Activated CD4-positive, alpha-beta memory T cell treated with anti-CD3 and anti-CD28 coated beads, Interleukin-2, amount 10 ng/mL, durations not matched to agents 7 days and 5 days (primary cell): ENCODE measurements at regions of chr3 and their contacts with region 1.

Region 1: GRCh38 chr3:69161587-69162307 is 39.4 kb upstream of the LMOD3 start:
- DNase-seq: peak; percentile 42
- H3K4me3 Mint-ChIP-seq: no peak overlapping the region
- H3K27ac Mint-ChIP-seq: no peak overlapping the region
- H3K4me1 Mint-ChIP-seq: peaks cover 15% of the 10 kb centered on the region
- H3K27me3 Mint-ChIP-seq: peaks cover 7% of the 10 kb centered on the region

Region 2: DNA sequence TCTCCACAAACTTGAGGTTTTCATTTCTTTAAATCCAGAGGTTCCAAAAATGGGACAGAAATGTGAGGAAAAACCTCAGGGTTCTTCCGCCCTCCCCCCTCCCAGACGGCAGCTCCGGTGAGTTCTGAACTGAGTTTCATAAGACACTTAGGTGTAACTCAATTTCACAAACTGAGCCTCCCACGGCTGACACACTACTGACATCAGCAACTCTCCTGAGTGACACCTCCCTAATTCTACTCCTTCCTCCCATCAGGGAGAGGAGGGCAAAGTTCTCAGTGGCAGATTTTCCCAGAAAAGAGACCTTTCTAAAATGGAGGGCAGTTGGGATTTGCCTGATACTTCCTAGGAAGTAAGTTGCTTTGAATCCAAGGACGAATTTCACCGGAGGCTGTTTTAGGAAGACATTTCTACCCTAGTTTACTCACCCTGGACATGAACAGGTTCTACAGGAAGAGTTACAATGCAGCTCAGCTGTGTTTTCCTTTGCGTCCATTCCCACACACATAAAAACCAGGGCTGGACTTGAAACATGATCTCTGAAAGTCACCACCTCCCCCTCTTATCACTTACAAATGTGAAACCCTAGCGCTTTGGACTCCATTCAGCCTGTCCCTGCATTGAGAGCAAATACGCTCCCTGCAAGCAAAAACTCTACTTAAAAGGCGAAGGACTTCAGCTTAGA is 38.8 kb after region 1 on chr3:
- CTCF ChIA-PET with region 1: interaction called, 19 read pairs
- POLR2A ChIA-PET with region 1: interaction called, 6 read pairs
- DNase-seq: peak; percentile 68
- H3K4me3 Mint-ChIP-seq: peak overlapping the region; percentile 85
- H3K27ac Mint-ChIP-seq: peak overlapping the region; percentile 97
- H3K4me1 Mint-ChIP-seq: peaks cover 69% of the 10 kb centered on the region
- H3K27me3 Mint-ChIP-seq: no peaks in the 10 kb centered on the region

Region 3: GRCh38 chr3:69313251-69313650 is 151.5 kb after region 1 on chr3:
- CTCF ChIA-PET with region 1: interaction called, 271 read pairs
- POLR2A ChIA-PET with region 1: no interaction called
- DNase-seq: no peak
- H3K4me3 Mint-ChIP-seq: no peak overlapping the region
- H3K27ac Mint-ChIP-seq: no peak overlapping the region
- H3K4me1 Mint-ChIP-seq: no peaks in the 10 kb centered on the region
- H3K27me3 Mint-ChIP-seq: peaks cover 1% of the 10 kb centered on the region

Region 4: DNA sequence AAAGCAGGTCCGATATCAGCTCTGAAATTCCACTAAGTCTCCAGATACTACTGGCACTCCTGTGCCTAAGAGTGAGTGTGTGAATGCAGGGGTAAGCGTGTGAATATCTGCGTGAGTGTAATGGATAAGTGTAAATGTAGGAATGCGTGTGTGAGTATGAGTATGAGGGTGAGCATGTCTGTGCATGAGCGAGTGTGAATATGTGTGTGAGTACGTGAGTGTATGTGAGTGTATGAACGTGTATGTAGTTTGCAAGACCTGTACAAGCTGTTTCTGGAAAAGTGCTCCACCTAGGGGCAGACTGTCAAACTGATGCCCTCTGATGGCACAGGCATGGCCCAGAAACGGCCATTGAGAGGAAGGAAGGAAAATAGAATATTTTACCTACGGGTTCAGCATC is 248.5 kb after region 1 on chr3:
- CTCF ChIA-PET with region 1: interaction called, 25 read pairs
- POLR2A ChIA-PET with region 1: no interaction called
- DNase-seq: peak; percentile 74
- H3K4me3 Mint-ChIP-seq: no peak overlapping the region
- H3K27ac Mint-ChIP-seq: no peak overlapping the region
- H3K4me1 Mint-ChIP-seq: peaks cover 5% of the 10 kb centered on the region
- H3K27me3 Mint-ChIP-seq: peaks cover 12% of the 10 kb centered on the region